GM12878 (cell line): ENCODE measurements at regions of chr3 and their contacts with region 1.

Region 1: DNA sequence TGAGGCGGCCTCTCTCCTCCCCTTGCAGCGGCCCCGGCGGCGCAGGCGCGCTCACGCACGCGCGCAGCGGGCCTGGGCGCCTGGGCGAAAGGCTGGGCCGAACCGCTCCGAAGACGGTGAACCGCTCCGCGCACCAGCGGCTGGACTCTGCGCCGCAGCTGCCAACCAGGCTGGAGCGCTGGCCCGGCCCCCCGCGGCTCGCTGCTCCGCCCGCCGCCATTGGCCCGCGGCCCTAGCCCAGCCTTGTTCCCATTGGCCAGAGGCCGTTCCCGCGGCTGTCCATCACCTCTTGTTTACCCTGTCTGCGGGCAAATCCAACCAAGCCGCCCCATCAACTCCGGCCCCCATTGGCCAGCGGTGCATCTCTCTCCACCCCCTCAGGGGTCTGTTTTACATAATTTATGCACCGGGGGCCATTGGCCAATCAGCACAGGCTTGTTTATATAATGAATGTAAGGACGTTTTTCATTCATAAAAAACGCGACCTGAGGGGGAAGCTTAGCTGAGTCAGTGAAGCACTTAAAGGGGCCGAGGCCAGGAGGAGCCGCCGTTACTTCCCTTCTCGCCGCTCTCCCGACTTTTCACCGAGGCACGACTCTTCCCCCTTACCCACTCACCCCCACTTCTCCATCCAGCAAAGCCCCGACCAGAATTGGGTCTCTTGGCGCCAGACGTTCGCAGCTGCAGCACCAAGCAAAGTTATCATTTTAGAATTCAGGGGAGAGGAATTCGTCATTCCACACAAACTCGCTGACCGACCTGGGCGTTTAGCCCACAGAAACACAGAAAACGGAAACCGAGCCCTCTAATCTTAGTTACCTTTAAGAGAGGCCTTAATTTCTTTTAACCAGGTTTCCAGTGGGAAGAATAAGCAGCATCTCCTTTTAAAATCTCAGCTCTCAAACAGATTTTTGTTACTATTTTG is at the start of gene ETV5:
- DNase-seq: peak; percentile 90
- ATAC-seq: peak; percentile 96
- H3K4me3 ChIP-seq: peak within 1 kb of the TSS; percentile 79
- H3K27ac ChIP-seq: peak within 1 kb of the TSS; percentile 46; the same call in 1 of the 2 replicates
- H3K4me1 ChIP-seq: peaks cover 24% of the 10 kb centered on the region
- H3K27me3 ChIP-seq: peaks cover 0 to 15% of the 10 kb centered on the region in 2 experiments; a peak in 2 of 4 replicates
- CTCF ChIP-seq: no peak
- EP300 ChIP-seq: no peak
- POLR2A ChIP-seq: peak; percentile 89
- RAD21 ChIP-seq: no peak
- polyA plus RNA-seq, gene ETV5: 5.0 to 5.4 TPM

Region 2: DNA sequence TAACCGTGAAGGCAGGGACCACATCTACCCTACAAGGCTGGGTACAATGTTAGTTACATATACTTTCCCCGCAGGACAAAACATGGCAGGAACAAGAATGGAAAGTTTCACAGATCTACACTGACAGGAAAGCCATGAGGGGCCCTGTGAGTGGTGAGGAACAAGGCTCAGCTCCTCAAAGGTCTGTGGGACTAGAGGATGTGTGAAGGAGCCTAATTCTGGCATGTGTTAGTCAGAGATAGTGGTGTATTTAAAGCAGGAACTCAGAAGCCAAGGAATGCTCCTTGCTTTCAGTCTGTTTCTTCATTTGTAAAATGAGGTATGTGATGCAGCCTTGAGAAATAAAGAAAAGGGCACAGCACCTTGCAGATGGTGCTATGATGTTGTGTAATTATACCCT is 25.5 kb before region 1 on chr3:
- CTCF ChIA-PET with region 1: interaction called, 4 read pairs
- POLR2A ChIA-PET with region 1: interaction called, 4 read pairs
- RAD21 ChIA-PET with region 1: interaction called, 3 read pairs
- SMC1A ChIA-PET with region 1: interaction called, 11 read pairs
- in situ Hi-C with region 1: no loop called
- intact Hi-C with region 1: no loop called
- DNase-seq: no peak
- ATAC-seq: no peak
- H3K4me3 ChIP-seq: no peak overlapping the region
- H3K27ac ChIP-seq: no peak overlapping the region
- H3K4me1 ChIP-seq: no peaks in the 10 kb centered on the region
- H3K27me3 ChIP-seq: no peaks in the 10 kb centered on the region; a peak in 1 of 4 replicates
- CTCF ChIP-seq: no peak
- EP300 ChIP-seq: no peak
- POLR2A ChIP-seq: no peak
- RAD21 ChIP-seq: no peak

Region 3: GRCh38 chr3:186152889-186153292 is 43.7 kb after region 1 on chr3:
- CTCF ChIA-PET with region 1: interaction called, 3 read pairs
- POLR2A ChIA-PET with region 1: interaction called, 6 read pairs
- RAD21 ChIA-PET with region 1: interaction called, 5 read pairs
- SMC1A ChIA-PET with region 1: interaction called, 4 read pairs
- in situ Hi-C with region 1: no loop called
- intact Hi-C with region 1: loop called (anchors 5 kb)
- DNase-seq: peak; percentile 60
- ATAC-seq: peak; percentile 95
- H3K4me3 ChIP-seq: peak overlapping the region; percentile 34; the same call in 1 of the 2 replicates
- H3K27ac ChIP-seq: peak overlapping the region; percentile 68
- H3K4me1 ChIP-seq: peaks cover 28% of the 10 kb centered on the region
- H3K27me3 ChIP-seq: no peaks in the 10 kb centered on the region
- CTCF ChIP-seq: no peak
- EP300 ChIP-seq: peak; percentile 56 to 68; a peak in 2 of 4 replicates
- POLR2A ChIP-seq: no peak
- RAD21 ChIP-seq: peak; percentile 2; the same call in 1 of the 2 replicates

Region 4: GRCh38 chr3:186185194-186185787 is 76.1 kb after region 1 on chr3:
- CTCF ChIA-PET with region 1: no interaction called
- POLR2A ChIA-PET with region 1: no interaction called
- RAD21 ChIA-PET with region 1: no interaction called
- SMC1A ChIA-PET with region 1: no interaction called
- in situ Hi-C with region 1: no loop called
- intact Hi-C with region 1: no loop called
- DNase-seq: peak; percentile 16
- ATAC-seq: peak; percentile 75
- H3K4me3 ChIP-seq: no peak overlapping the region
- H3K27ac ChIP-seq: no peak overlapping the region
- H3K4me1 ChIP-seq: peaks cover 9% of the 10 kb centered on the region
- H3K27me3 ChIP-seq: peaks cover 0 to 1% of the 10 kb centered on the region in 2 experiments; a peak in 2 of 4 replicates
- CTCF ChIP-seq: no peak
- EP300 ChIP-seq: no peak
- POLR2A ChIP-seq: no peak
- RAD21 ChIP-seq: no peak

Region 5: DNA sequence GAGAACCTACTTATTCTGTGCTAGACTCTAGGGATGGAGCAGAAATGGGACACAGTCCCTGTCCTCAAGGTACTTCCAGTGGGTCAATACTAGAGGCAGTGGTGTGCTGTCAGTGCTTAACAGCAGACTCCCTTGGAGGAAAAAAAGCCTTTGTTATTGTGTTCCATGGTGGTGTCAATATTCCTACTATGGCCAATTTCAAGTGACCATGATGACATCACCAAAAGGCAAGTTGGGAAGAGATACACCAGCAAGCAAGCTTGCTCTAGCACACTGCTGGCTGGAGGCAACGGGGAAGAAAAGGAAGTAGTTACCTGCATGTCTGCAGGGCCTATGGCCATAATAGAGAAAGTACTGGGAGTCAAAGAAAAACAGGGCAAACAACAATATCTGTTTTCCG is 89.2 kb after region 1 on chr3:
- CTCF ChIA-PET with region 1: no interaction called
- POLR2A ChIA-PET with region 1: no interaction called
- RAD21 ChIA-PET with region 1: no interaction called
- SMC1A ChIA-PET with region 1: no interaction called
- in situ Hi-C with region 1: no loop called
- intact Hi-C with region 1: no loop called
- DNase-seq: no peak
- ATAC-seq: no peak
- H3K4me3 ChIP-seq: no peak overlapping the region
- H3K27ac ChIP-seq: no peak overlapping the region
- H3K4me1 ChIP-seq: no peaks in the 10 kb centered on the region; the same call in 1 of the 2 replicates
- H3K27me3 ChIP-seq: peaks cover 0 to 10% of the 10 kb centered on the region in 2 experiments; a peak in 2 of 4 replicates
- CTCF ChIP-seq: no peak
- EP300 ChIP-seq: no peak
- POLR2A ChIP-seq: no peak
- RAD21 ChIP-seq: no peak